Activated CD4-positive, alpha-beta T cell treated with anti-CD3 and anti-CD28 coated beads, Interleukin-2, amount 10 ng/mL, durations not matched to agents 24 days and 14 days (primary cell): ENCODE measurements at regions of chr17 and their contacts with region 1.

Region 1: GRCh38 chr17:41918314-41919164 is at the start of gene ACLY:
- DNase-seq: peak; percentile 100
- H3K4me3 Mint-ChIP-seq: peak within 1 kb of the TSS; percentile 98
- H3K27ac Mint-ChIP-seq: peak within 1 kb of the TSS; percentile 95
- H3K4me1 Mint-ChIP-seq: peaks cover 26% of the 10 kb centered on the region
- H3K27me3 Mint-ChIP-seq: no peaks in the 10 kb centered on the region
- total RNA-seq, gene ACLY: 225 and 229 TPM in 2 replicates

Region 2: GRCh38 chr17:41930009-41930832 is 11.7 kb after region 1 on chr17 and contains the start of gene ODAD4:
- intact Hi-C with region 1: loop called (anchors 1 kb)
- DNase-seq: peak; percentile 99
- H3K4me3 Mint-ChIP-seq: peak within 1 kb of the TSS; percentile 95
- H3K27ac Mint-ChIP-seq: peak within 1 kb of the TSS; percentile 96
- H3K4me1 Mint-ChIP-seq: peaks cover 31% of the 10 kb centered on the region
- H3K27me3 Mint-ChIP-seq: no peaks in the 10 kb centered on the region
- total RNA-seq, gene ODAD4: 0.63 and 0.76 TPM in 2 replicates

Region 3: GRCh38 chr17:42019509-42020404 is 101.2 kb after region 1 on chr17 and contains the start of gene NKIRAS2:
- intact Hi-C with region 1: loop called (anchors 5 kb)
- DNase-seq: peak; percentile 99
- H3K4me3 Mint-ChIP-seq: peak within 1 kb of the TSS; percentile 99
- H3K27ac Mint-ChIP-seq: peak within 1 kb of the TSS; percentile 85
- H3K4me1 Mint-ChIP-seq: peaks cover 47% of the 10 kb centered on the region
- H3K27me3 Mint-ChIP-seq: no peaks in the 10 kb centered on the region
- total RNA-seq, gene NKIRAS2: 29.5 and 30.3 TPM in 2 replicates